ENCODE measurements at regions of chr17 and their contacts with region 1.

Region 1: DNA sequence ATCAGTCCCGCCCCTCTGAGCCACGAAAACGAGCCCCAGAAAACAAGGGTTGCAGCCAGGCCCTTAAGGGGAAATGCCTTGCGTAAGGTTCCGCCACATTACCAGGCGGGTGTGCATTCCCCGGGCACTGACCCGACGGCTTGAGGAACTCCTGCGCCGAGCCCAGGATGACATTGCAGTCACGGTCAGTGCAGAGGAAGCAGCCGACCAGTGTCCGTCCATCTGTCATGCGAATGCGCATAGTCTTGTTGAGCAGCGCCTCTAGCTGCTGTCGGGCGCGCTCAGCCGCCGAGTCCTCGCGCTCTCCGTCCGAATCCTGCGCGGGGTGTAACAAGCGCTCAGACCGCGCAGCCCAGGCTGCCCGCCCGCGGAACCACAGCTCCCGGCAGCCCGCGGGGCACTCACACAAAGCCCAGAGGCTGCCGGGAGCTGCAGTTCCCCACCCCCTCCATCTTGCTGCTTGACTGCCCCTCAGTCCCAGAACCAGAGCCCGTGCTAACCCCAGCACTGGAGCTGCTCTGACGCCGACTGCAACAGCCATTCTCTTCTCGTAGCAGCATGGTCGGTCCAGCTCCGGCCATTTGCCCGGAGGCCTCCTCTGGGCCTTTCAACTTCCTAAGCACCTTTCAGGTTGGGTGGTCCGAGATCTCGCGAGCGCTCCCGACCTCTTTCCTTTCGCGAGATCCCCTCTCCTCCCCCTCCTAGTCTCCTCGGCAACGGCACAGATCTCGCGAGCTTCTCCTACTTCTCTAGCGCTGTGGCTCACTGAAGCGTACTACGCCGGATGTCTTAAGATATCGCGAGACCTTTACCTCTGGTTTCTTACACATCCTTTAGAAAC is at the start of gene NAA38:
- DNase-seq: peak; percentile 99
- H3K4me3 ChIP-seq: peak within 1 kb of the TSS; percentile 81
- H3K27ac ChIP-seq: peak within 1 kb of the TSS; percentile 91
- H3K27me3 ChIP-seq: no peaks in the 10 kb centered on the region
- CTCF ChIP-seq: peak; percentile 55
- polyA plus RNA-seq, gene NAA38: 49.3 and 59.0 TPM in 2 replicates

Region 2: GRCh38 chr17:7825206-7825990 is 31.7 kb before region 1 on chr17:
- CTCF ChIA-PET with region 1: interaction called, 11 read pairs
- POLR2A ChIA-PET with region 1: interaction called, 6 read pairs
- DNase-seq: no peak
- H3K4me3 ChIP-seq: no peak overlapping the region
- H3K27ac ChIP-seq: no peak overlapping the region
- H3K27me3 ChIP-seq: peaks cover 9% of the 10 kb centered on the region
- CTCF ChIP-seq: no peak

Region 3: DNA sequence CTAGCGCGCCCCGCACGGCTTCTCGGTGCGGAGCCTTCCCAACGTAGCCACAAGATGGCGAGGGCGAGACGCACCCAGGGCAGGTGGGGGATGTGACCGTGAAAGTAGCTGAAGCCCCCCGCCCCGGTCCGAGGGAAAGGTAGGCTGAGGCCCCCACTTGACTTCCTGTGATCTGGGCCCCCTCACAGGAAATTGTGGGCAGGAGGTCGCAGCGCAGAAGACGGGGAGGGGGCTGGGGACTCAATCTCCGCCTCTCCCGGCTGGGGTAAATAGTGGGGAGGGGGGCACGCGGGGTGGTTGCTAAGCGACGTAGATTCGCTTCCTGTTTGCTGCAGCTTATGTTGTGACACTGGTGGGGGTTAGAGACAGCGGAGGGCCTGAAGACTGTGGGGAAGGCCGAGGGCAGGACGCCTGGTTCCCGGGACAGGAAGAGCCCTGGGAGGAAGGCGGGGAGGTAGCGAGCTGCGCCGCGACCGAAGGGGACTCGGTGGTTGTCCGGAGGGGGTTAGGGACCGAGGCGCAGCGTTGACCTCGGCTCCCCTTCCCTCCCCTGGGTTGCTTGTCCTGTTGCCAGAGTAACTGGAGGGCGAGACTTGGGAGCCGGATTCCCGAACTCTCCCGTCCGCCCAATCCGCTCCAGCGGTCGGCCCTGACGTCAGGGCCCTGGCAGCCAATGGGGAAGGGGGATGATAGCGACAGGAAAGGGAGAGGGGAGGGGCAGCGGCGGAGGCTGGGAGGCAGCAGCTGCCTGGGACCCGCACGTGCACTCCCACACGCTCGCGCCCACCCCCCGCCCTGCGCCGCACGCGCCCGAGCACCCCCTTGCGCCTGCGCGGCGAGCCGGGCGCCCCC is 21.9 kb before region 1 on chr17:
- CTCF ChIA-PET with region 1: interaction called, 5 read pairs
- POLR2A ChIA-PET with region 1: interaction called, 21 read pairs
- DNase-seq: peak; percentile 97
- H3K4me3 ChIP-seq: peak overlapping the region; percentile 84
- H3K27ac ChIP-seq: peak overlapping the region; percentile 98
- H3K27me3 ChIP-seq: peaks cover 12% of the 10 kb centered on the region
- CTCF ChIP-seq: peak; percentile 82

Region 4: DNA sequence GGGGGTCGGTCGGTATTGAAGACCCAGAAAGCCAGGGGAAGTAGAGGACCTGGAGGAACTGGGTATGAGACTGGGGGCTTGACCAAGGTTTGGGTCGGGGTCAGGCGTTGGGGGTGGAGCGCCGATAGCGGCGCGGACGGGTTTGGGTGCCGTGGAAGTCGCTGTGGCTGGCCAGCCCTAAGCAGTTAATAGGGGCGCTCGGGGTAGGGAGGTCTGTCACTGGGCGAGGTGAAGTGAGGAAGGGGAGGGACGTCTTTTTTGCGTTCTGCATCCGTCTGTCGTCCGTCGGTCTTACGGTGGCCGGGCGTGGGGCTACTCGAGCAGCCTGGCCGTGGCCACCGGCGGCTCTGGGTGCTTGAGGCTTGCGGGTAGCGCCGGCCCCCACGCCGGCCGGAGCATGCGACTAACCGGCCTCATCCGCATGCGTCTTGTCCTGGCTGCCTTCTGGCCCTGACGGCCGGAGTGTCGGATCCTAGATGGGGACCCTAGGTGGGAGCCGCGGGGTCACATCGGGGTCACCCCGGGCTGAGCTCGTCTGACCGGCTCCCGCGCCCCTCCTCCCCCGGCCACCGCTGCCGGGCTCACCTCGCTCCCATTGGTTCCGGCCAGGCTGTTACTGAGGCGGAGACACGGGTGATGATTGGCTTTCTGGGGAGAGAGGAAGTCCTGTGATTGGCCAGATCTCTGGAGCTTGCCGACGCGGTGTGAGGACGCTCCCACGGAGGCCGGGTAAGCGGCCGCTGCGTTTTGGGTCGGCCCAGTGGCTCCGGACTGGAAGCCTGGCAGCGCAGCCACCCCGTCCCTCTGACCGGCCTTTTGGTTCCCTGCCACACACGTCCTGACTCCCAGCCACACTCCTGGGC is 12.6 kb before region 1 on chr17:
- CTCF ChIA-PET with region 1: interaction called, 11 read pairs
- POLR2A ChIA-PET with region 1: interaction called, 30 read pairs
- DNase-seq: peak; percentile 82
- H3K4me3 ChIP-seq: peak overlapping the region; percentile 59
- H3K27ac ChIP-seq: peak overlapping the region; percentile 99
- H3K27me3 ChIP-seq: no peaks in the 10 kb centered on the region
- CTCF ChIP-seq: no peak

Region 5: GRCh38 chr17:7897773-7898172 is 40.7 kb after region 1 on chr17:
- CTCF ChIA-PET with region 1: interaction called, 46 read pairs
- POLR2A ChIA-PET with region 1: no interaction called
- DNase-seq: no peak
- H3K4me3 ChIP-seq: no peak overlapping the region
- H3K27ac ChIP-seq: no peak overlapping the region
- H3K27me3 ChIP-seq: no peaks in the 10 kb centered on the region
- CTCF ChIP-seq: peak; percentile 70

Region 6: GRCh38 chr17:7915611-7916382 is 58.7 kb after region 1 on chr17 and contains the start of gene RNF227:
- CTCF ChIA-PET with region 1: interaction called, 3 read pairs
- POLR2A ChIA-PET with region 1: interaction called, 10 read pairs
- DNase-seq: peak; percentile 92
- H3K4me3 ChIP-seq: peak within 1 kb of the TSS; percentile 74
- H3K27ac ChIP-seq: peak within 1 kb of the TSS; percentile 89
- H3K27me3 ChIP-seq: no peaks in the 10 kb centered on the region
- CTCF ChIP-seq: no peak
- polyA plus RNA-seq, gene RNF227: 1.3 and 1.4 TPM in 2 replicates